ENCODE measurements at regions of chr18 and their contacts with region 1.

Region 1: DNA sequence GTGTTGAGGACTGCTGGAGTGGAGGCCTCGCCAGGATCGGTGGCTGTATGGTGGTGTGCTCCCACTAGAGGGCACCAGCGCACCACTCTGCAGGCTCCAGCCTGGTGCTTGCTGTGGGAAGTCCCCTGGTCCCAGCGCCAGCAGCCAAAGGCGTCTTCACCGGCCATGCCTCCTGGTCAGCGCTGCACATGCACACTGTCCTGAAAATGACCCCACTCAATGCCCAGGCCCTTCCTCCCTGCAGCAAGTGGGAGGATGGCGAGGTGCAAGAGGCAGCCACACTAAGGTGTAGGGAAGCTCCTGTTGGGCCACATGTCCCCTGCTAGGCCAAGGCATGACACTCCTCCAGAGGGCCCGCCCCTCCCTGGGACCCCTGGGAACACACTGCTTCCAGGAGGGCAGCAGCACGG is 136.5 kb downstream of the CTIF start:
- DNase-seq: peak; percentile 89 to 90
- ATAC-seq: peak; percentile 85 to 94 (median 90)
- H3K4me3 ChIP-seq: no peak overlapping the region
- H3K27ac ChIP-seq: peak overlapping the region in 2 of 10 donors; percentile 12 to 57
- H3K4me1 ChIP-seq: peaks cover 11 to 72% (median 66%) of the 10 kb centered on the region in 9 donors
- H3K27me3 ChIP-seq: no peaks in the 10 kb centered on the region
- CTCF ChIP-seq: peak; percentile 91 to 98 (median 94)

Region 2: GRCh38 chr18:48488388-48488850 is 186.9 kb before region 1 on chr18:
- intact Hi-C with region 1: no loop called
- DNase-seq: peak; percentile 63 to 81
- ATAC-seq: peak; percentile 79 to 95 (median 91)
- H3K4me3 ChIP-seq: no peak overlapping the region
- H3K27ac ChIP-seq: peak overlapping the region in 5 of 10 donors; percentile 46 to 75 (median 72)
- H3K4me1 ChIP-seq: peaks cover 0 to 37% (median 16%) of the 10 kb centered on the region in 9 donors
- H3K27me3 ChIP-seq: no peaks in the 10 kb centered on the region
- CTCF ChIP-seq: no peak

Region 3: DNA sequence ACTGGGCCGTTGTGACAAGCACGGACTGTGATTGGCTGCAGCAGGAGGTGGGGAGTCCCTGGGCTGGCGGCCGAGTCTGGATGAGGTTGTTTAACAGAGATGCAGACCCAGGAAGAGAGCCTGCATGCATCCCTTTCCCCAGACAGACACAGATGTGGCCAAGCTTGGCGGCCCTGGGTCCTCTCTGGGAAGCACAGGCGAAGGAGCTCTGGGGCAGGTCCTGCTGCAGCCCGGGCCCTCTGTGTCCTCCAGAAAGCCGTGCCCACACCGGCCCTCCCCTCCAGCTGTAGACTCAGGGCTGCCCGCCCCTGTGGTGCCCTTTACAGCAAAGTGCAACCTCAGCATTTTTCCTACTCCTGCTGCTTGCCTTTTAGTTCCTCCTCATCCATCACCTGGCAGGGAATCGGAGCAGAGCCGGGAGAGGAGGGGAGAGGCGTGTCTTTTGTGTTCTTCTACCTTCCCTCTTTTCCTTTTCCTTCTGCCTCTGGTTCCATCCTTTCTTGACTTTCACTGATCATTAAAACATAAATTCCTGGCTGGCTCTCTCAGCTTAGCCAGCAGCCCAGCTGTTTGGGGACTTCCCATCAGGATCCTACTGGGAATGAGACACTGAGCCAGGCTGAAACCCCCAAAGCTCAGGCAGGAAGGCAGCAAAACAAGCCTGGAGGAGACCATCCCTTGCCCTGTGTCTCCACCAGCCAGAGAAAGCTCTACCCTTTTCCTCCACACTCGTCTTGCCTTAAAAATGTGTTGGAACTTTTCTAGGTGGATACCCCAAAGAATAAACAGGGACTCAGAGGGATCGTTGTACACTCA is 61.6 kb before region 1 on chr18:
- intact Hi-C with region 1: no loop called
- DNase-seq: peak in 1 of 2 donors; percentile 52
- ATAC-seq: peak in 7 of 8 donors; percentile 26 to 61 (median 42)
- H3K4me3 ChIP-seq: no peak overlapping the region
- H3K27ac ChIP-seq: peak overlapping the region in 2 of 10 donors; percentile 19 to 59
- H3K4me1 ChIP-seq: peaks cover 12 to 77% (median 56%) of the 10 kb centered on the region in 9 donors
- H3K27me3 ChIP-seq: no peaks in the 10 kb centered on the region
- CTCF ChIP-seq: no peak

Region 4: GRCh38 chr18:48629730-48630324 is 45.5 kb before region 1 on chr18:
- intact Hi-C with region 1: no loop called
- DNase-seq: no peak
- ATAC-seq: no peak
- H3K4me3 ChIP-seq: no peak overlapping the region
- H3K27ac ChIP-seq: no peak overlapping the region
- H3K4me1 ChIP-seq: peaks cover 0 to 2% (median 0%) of the 10 kb centered on the region in 9 donors
- H3K27me3 ChIP-seq: no peaks in the 10 kb centered on the region
- CTCF ChIP-seq: no peak

Region 5: DNA sequence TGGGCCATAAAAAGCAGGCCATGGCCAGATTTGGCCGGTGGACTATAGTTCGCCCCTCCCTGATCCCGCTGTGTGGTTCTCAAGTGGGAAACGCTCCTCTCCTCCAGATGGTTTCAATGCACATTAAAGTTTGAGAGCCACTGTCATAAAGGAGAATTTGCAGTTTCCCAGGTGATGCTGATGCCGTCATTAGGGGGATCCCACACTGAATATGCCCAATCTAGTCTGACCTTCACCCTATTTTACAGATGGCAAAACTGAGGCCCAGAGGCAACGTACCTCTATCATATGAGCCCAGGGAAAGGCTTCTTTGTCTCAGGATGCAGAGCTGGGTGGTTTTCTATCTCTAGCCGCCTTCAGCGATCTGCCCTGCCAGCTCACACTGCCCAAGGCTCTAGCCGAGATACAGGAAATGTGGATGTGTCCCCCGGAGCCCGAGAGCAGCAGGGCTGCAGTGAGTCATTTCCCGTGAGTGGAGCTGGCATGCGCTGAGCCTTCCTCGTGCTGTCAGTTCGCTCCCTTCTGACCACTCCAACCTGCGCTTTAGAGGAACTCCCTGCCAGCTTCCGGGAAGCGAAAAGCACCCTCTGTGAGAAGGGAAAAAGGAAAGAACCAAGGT is 159.2 kb after region 1 on chr18:
- intact Hi-C with region 1: loop called in 2 of 10 experiments (anchors 5 to 10 kb)
- DNase-seq: peak; percentile 61 to 67
- ATAC-seq: peak; percentile 53 to 81 (median 72)
- H3K4me3 ChIP-seq: peak overlapping the region in 1 of 10 donors; percentile 46
- H3K27ac ChIP-seq: peak overlapping the region in 3 of 10 donors; percentile 12 to 83 (median 57)
- H3K4me1 ChIP-seq: peaks cover 10 to 72% (median 45%) of the 10 kb centered on the region in 9 donors
- H3K27me3 ChIP-seq: no peaks in the 10 kb centered on the region
- CTCF ChIP-seq: no peak

Region 6: DNA sequence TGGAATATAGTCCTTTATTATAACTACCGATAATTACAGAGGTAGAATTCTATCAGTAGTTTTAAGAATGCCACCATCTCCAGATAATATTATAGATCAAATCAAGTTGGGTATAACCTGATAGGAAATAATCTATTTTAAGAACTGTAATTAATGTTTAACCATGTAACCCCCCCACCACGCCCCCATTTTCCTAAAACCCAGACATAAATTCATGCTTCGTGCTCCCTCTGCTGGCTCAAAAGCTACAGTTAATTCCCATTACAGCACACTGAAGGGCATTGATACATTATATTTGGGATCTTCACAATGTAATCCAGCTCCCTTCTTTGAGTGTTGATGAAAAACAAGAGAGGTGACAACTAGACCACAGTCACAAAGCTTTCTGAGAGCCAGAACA is 503.4 kb after region 1 on chr18:
- intact Hi-C with region 1: loop called in 7 of 10 experiments (anchors 5 to 10 kb)
- DNase-seq: peak in 1 of 2 donors; percentile 35
- ATAC-seq: peak in 2 of 8 donors; percentile 40 to 56
- H3K4me3 ChIP-seq: no peak overlapping the region
- H3K27ac ChIP-seq: no peak overlapping the region
- H3K4me1 ChIP-seq: peaks cover 0 to 25% (median 7%) of the 10 kb centered on the region in 9 donors
- H3K27me3 ChIP-seq: no peaks in the 10 kb centered on the region
- CTCF ChIP-seq: peak in 8 of 9 donors; percentile 16 to 67 (median 56)

Region 7: DNA sequence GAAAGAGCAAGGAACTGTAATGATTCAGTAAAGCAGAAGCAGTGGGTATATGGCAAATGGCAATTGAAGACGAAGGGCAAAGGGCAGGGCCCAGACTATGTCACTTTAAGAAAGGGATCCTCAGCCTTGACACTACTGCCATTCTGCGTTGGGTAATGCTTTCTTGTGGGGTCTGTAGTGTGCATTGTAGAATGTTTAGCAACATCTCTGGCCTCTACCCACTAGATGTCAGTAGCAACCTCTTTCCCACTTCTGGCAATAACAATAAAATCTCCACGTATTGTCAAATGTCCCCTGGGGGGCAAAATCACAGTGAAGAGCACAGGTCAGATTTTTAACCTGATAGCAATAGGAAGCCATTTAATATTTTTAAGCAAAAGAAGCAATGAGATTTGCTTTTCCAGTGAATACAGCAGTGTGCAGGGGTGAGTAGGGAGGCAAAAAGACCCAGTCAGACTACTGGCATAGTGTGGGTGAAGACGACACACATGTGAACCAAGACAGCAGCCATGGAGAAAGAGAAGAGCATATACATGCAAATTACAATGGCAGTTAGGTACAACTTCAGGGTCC is 575.5 kb after region 1 on chr18:
- intact Hi-C with region 1: loop called in 1 of 10 experiments (anchors 10 kb)
- DNase-seq: no peak
- ATAC-seq: peak in 2 of 8 donors; percentile 35 to 42
- H3K4me3 ChIP-seq: no peak overlapping the region
- H3K27ac ChIP-seq: no peak overlapping the region
- H3K4me1 ChIP-seq: peaks cover 0 to 18% (median 0%) of the 10 kb centered on the region in 9 donors
- H3K27me3 ChIP-seq: no peaks in the 10 kb centered on the region
- CTCF ChIP-seq: peak in 7 of 9 donors; percentile 35 to 63 (median 48)

Region 8: DNA sequence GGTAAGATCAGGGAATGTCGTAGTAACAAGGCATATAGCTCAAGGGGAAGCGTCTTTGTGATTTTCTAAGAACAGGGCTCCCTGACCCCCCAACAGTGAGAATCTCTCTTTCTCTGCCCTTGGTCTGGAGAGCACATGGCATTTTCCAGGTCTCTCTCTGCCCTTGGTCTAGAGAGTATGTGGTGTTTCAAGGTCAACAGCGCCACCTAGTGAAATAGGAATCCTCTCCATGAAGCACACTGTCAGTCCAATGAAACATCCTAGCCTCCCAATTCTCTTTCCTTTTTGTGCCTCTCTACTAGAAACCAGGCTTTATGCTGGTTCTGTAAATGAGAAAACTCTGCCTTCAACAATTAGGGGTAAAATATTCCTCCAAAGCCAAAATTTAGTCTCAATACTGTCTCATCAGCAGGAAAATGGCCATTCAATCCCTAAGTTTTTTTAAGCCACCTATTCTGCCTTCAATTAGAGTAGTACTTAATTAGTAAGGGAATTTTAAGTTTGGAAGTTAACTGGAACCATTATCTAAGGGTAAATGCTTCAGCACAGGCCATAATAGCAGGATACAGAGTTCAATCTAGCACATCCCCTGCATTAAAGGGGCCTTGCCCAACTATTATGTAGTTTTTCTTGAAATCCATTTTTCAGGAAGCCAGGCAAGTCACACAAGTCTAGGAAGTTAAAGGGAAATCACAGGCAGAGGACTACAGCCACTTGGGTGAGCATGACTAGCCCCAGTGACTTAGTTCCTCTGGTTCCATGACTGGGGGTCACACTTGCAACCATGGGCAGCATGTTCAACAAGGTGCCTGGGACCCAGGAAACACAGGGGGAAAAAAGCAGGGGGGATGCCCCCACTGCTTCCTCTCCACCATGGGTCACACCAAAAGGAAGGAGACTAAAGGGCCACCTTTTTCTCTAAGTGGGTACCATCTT is 772.7 kb after region 1 on chr18:
- intact Hi-C with region 1: loop called in 6 of 10 experiments (anchors 2 to 10 kb)
- DNase-seq: peak in 1 of 2 donors; percentile 28
- ATAC-seq: peak in 6 of 8 donors; percentile 73 to 84 (median 76)
- H3K4me3 ChIP-seq: no peak overlapping the region
- H3K27ac ChIP-seq: no peak overlapping the region
- H3K4me1 ChIP-seq: peaks cover 0 to 4% (median 0%) of the 10 kb centered on the region in 9 donors
- H3K27me3 ChIP-seq: no peaks in the 10 kb centered on the region
- CTCF ChIP-seq: peak; percentile 25 to 67 (median 51)